AG04450 (cell line): ENCODE measurements at regions of chr3 and their contacts with region 1.

Region 1: GRCh38 chr3:171772427-171773056 is 37.7 kb downstream of the PLD1 start:
- DNase-seq: no peak
- H3K4me3 ChIP-seq: no peak overlapping the region
- H3K27ac ChIP-seq: no peak overlapping the region
- H3K27me3 ChIP-seq: no peaks in the 10 kb centered on the region
- CTCF ChIP-seq: peak; percentile 83

Region 2: DNA sequence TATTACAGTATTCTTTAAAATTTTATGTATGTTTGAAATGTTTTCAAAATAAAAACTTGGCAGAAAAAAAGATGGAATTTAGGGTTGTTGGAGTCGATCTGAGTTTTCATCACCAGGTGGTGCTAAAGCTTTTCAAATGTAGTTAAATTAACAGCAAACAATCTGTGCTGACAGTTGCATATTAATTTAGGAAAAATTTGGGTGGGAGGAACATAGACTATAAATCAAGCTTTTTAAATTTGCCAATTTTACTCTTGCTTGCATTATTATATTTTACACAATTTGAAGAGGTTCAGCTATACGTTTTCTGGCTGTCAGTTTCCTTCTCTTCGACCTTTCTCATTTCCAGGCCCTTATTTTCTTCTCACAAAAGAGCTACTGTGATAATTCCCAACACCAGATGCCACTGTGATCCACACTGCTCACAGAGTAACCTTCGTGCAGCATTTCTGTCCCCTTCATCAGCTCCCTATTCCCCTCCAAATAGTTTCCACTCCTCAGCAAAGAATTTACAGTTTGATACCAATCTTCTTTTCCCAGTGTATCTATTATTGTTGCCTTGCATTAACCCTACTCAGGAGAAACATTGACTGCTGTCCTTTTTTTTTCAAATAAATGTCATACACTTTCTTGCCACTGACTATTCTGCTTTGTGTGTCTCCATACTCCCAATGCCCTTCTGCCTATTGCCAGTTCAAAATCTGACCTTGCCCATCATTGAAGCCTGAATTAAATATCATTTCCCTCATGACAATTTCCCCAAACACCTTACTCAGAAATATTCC is 810.7 kb before region 1 on chr3:
- CTCF ChIA-PET with region 1: interaction called, 10 read pairs
- POLR2A ChIA-PET with region 1: no interaction called
- DNase-seq: peak; percentile 10
- H3K4me3 ChIP-seq: no peak overlapping the region
- H3K27ac ChIP-seq: no peak overlapping the region
- H3K27me3 ChIP-seq: no peaks in the 10 kb centered on the region
- CTCF ChIP-seq: peak; percentile 65

Region 3: DNA sequence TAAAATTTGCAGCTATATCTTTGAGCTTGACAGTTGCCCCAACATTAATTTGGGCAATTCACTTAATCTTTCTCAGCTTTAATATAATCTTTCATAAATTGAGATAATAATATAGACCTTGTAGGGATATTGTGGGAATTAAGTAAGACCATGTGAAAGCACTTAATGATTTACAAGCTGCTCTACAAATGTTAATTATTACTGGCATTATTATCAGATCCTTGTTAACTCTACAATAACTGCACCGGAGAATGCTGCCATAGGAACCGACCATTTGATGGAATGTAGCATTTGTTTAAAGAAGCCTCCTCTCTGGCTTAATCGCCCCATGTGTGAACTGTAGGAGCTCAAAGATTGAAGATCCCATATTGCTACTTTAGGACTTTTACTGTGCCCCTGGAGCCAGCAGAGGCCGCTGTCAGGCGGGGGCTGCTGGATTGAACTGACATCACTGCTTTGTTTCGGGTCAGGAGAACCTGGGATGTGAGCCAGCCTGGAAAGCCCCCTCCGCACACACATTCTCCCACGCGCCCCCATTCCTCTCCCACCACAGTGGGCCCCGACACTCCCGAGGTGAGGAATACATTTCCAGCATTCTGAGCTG is 158.1 kb before region 1 on chr3:
- CTCF ChIA-PET with region 1: interaction called, 50 read pairs
- POLR2A ChIA-PET with region 1: no interaction called
- DNase-seq: no peak
- H3K4me3 ChIP-seq: no peak overlapping the region
- H3K27ac ChIP-seq: no peak overlapping the region
- H3K27me3 ChIP-seq: no peaks in the 10 kb centered on the region
- CTCF ChIP-seq: peak; percentile 76

Region 4: GRCh38 chr3:171646357-171647133 is 126.0 kb before region 1 on chr3:
- CTCF ChIA-PET with region 1: interaction called, 116 read pairs
- POLR2A ChIA-PET with region 1: interaction called, 7 read pairs
- DNase-seq: peak; percentile 45
- H3K4me3 ChIP-seq: no peak overlapping the region
- H3K27ac ChIP-seq: peak overlapping the region; percentile 2
- H3K27me3 ChIP-seq: no peaks in the 10 kb centered on the region
- CTCF ChIP-seq: peak; percentile 74

Region 5: DNA sequence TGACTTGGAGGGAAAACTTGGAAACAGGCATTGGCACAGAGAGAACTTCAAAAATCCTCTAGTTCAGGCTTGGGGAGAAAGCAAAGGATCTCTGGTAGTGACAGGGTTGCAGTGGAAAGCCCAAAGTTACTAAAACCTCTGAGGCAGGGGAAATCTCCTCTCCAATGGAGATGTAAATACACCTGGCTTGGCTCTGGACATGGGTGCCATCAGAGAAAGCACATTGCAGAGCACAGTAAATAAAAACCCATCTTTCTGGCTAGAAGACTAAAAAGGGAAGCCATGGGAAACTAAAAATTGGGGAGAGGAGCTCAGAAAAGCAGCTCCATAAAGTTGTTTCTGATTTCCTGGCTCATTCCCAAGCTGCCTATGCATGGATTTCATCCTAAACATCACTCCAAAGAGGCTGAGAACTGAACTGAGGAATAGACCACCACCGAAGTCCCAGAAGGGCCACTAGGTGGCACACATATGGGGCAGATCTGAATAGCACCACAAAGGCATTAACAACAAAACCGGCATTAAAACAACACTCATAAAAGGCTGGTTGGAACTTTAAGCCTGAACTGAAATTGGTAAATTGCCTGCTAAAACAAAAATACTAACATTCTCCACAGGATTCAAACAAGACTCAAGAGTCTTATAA is 68.7 kb before region 1 on chr3:
- CTCF ChIA-PET with region 1: interaction called, 17 read pairs
- POLR2A ChIA-PET with region 1: no interaction called
- DNase-seq: no peak
- H3K4me3 ChIP-seq: no peak overlapping the region
- H3K27ac ChIP-seq: no peak overlapping the region
- H3K27me3 ChIP-seq: no peaks in the 10 kb centered on the region
- CTCF ChIP-seq: peak; percentile 58

Region 6: GRCh38 chr3:171753665-171754408 is 18.7 kb before region 1 on chr3:
- CTCF ChIA-PET with region 1: interaction called, 47 read pairs
- POLR2A ChIA-PET with region 1: no interaction called
- DNase-seq: peak; percentile 49
- H3K4me3 ChIP-seq: no peak overlapping the region
- H3K27ac ChIP-seq: peak overlapping the region; percentile 49
- H3K27me3 ChIP-seq: no peaks in the 10 kb centered on the region
- CTCF ChIP-seq: no peak

Region 7: GRCh38 chr3:171806200-171807128 is 33.9 kb after region 1 on chr3:
- CTCF ChIA-PET with region 1: interaction called, 10 read pairs
- POLR2A ChIA-PET with region 1: interaction called, 4 read pairs
- DNase-seq: peak; percentile 76
- H3K4me3 ChIP-seq: no peak overlapping the region
- H3K27ac ChIP-seq: peak overlapping the region; percentile 66
- H3K27me3 ChIP-seq: no peaks in the 10 kb centered on the region
- CTCF ChIP-seq: no peak